ENCODE measurements at regions of chr3 and their contacts with region 1.

Region 1: DNA sequence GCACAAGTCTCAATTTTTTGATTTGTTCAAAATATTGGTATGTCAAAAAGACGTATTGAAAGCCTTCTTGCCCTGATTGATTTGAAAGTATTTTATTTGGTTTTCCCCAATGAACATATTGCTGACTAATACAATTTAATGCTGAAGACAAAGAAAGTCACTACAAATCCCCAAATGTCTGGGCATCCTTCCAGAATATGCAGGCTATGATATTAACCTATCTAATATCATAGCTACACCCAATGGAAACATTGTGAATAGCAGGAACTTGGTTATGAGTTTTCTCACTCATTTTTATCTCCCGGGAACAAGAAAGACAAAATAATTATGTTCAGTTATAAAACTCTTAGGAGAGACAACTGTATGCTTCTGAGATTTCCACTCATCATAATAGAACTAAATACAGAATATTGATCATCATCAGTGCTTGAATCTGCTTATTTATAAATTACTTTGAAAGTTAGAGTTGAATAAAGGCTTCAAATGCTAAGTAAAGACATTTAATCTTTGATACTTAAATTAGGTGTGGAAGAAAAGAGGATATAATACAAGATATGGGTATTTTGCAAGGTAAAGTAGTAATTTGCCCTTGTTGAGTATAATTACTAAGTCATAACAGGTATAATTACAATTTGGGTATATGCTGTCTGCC is 483.9 kb downstream of the RBMS3 start:
- DNase-seq: peak; percentile 89
- ATAC-seq: peak; percentile 57
- H3K4me3 ChIP-seq: no peak overlapping the region
- H3K27ac ChIP-seq: no peak overlapping the region
- H3K4me1 ChIP-seq: peaks cover 2% of the 10 kb centered on the region
- H3K27me3 ChIP-seq: no peaks in the 10 kb centered on the region
- CTCF ChIP-seq: peak; percentile 76
- POLR2A ChIP-seq: no peak
- RAD21 ChIP-seq: peak; percentile 78

Region 2: DNA sequence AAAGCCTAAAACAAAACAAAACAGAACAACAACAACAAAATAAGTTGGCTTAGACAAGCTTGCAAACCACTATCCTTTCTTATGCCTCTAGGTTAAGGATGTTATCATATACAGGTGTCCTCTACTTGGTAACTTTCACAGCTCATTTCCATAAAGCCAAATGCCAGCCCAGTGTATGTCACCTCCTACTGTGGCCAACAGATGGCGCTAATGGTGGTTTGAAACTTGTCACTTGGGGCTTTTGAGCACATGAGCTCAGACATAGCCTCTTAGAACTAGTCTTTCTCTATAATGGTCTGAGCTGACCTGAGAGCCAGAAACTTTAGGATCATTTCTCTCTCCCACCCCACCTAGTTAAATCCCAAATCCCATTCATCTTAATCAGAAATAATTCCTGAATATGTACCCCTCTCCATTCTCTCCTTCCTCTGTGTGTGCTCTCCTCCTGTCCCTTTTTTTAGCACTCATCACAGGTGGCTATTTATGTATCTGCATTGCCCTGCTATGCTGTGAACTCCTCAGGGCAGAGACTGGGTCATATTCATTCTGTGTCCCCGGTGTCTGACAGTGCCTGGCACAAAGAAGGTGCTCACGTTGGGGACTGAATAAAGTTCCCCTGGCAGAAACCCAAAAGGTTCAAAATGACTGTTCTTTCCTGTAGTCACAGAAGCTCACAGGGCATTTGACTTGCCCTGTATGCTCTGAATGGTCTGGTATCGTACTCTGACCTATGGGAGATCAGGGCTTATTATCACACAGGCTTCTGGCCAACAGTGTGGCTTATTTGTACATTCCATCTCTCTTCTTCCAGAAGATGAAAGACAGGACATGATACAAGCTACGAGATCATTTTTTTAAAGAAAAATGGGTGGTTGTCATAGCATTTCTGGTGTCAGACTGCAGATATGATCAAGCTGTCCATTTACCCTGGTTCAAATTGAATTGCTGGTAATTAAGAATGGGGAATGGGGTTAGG is 1096.8 kb before region 1 on chr3:
- CTCF ChIA-PET with region 1: no interaction called
- POLR2A ChIA-PET with region 1: no interaction called
- dilution Hi-C with region 1: no loop called
- in situ Hi-C with region 1: no loop called
- intact Hi-C with region 1: loop called (anchors 2 kb)
- DNase-seq: peak; percentile 52
- ATAC-seq: peak; percentile 85
- H3K4me3 ChIP-seq: no peak overlapping the region
- H3K27ac ChIP-seq: no peak overlapping the region
- H3K4me1 ChIP-seq: no peaks in the 10 kb centered on the region
- H3K27me3 ChIP-seq: peaks cover 2% of the 10 kb centered on the region; the same call in 1 of the 2 replicates
- CTCF ChIP-seq: peak; percentile 64
- POLR2A ChIP-seq: no peak
- RAD21 ChIP-seq: peak; percentile 62

Region 3: GRCh38 chr3:28853830-28854229 is 910.9 kb before region 1 on chr3:
- CTCF ChIA-PET with region 1: no interaction called
- POLR2A ChIA-PET with region 1: no interaction called
- dilution Hi-C with region 1: no loop called
- in situ Hi-C with region 1: no loop called
- intact Hi-C with region 1: loop called (anchors 10 kb)
- DNase-seq: peak; percentile 45
- ATAC-seq: no peak
- H3K4me3 ChIP-seq: no peak overlapping the region
- H3K27ac ChIP-seq: no peak overlapping the region
- H3K4me1 ChIP-seq: no peaks in the 10 kb centered on the region
- H3K27me3 ChIP-seq: peaks cover 4% of the 10 kb centered on the region; the same call in 1 of the 2 replicates
- CTCF ChIP-seq: peak; percentile 47
- POLR2A ChIP-seq: no peak
- RAD21 ChIP-seq: peak; percentile 50

Region 4: GRCh38 chr3:28916713-28917499 is 847.8 kb before region 1 on chr3:
- CTCF ChIA-PET with region 1: no interaction called
- POLR2A ChIA-PET with region 1: no interaction called
- dilution Hi-C with region 1: no loop called
- in situ Hi-C with region 1: loop called (anchors 10 kb)
- intact Hi-C with region 1: loop called (anchors 2 kb)
- DNase-seq: peak; percentile 65
- ATAC-seq: peak; percentile 66
- H3K4me3 ChIP-seq: peak overlapping the region; percentile 38
- H3K27ac ChIP-seq: peak overlapping the region; percentile 53
- H3K4me1 ChIP-seq: peaks cover 4% of the 10 kb centered on the region
- H3K27me3 ChIP-seq: no peaks in the 10 kb centered on the region
- CTCF ChIP-seq: peak; percentile 49
- POLR2A ChIP-seq: no peak
- RAD21 ChIP-seq: peak; percentile 70

Region 5: GRCh38 chr3:29144807-29145206 is 619.9 kb before region 1 on chr3:
- CTCF ChIA-PET with region 1: interaction called, 4 read pairs
- POLR2A ChIA-PET with region 1: no interaction called
- dilution Hi-C with region 1: no loop called
- in situ Hi-C with region 1: no loop called
- intact Hi-C with region 1: loop called (anchors 5 kb)
- DNase-seq: peak; percentile 65
- ATAC-seq: peak; percentile 52
- H3K4me3 ChIP-seq: no peak overlapping the region
- H3K27ac ChIP-seq: no peak overlapping the region
- H3K4me1 ChIP-seq: peaks cover 10% of the 10 kb centered on the region
- H3K27me3 ChIP-seq: no peaks in the 10 kb centered on the region
- CTCF ChIP-seq: peak; percentile 43
- POLR2A ChIP-seq: no peak
- RAD21 ChIP-seq: peak; percentile 49

Region 6: GRCh38 chr3:29802057-29802456 is 37.3 kb after region 1 on chr3:
- CTCF ChIA-PET with region 1: no interaction called
- POLR2A ChIA-PET with region 1: no interaction called
- dilution Hi-C with region 1: no loop called
- in situ Hi-C with region 1: no loop called
- intact Hi-C with region 1: no loop called
- DNase-seq: no peak
- ATAC-seq: no peak
- H3K4me3 ChIP-seq: no peak overlapping the region
- H3K27ac ChIP-seq: no peak overlapping the region
- H3K4me1 ChIP-seq: no peaks in the 10 kb centered on the region
- H3K27me3 ChIP-seq: no peaks in the 10 kb centered on the region
- CTCF ChIP-seq: no peak
- POLR2A ChIP-seq: no peak
- RAD21 ChIP-seq: no peak

Region 7: DNA sequence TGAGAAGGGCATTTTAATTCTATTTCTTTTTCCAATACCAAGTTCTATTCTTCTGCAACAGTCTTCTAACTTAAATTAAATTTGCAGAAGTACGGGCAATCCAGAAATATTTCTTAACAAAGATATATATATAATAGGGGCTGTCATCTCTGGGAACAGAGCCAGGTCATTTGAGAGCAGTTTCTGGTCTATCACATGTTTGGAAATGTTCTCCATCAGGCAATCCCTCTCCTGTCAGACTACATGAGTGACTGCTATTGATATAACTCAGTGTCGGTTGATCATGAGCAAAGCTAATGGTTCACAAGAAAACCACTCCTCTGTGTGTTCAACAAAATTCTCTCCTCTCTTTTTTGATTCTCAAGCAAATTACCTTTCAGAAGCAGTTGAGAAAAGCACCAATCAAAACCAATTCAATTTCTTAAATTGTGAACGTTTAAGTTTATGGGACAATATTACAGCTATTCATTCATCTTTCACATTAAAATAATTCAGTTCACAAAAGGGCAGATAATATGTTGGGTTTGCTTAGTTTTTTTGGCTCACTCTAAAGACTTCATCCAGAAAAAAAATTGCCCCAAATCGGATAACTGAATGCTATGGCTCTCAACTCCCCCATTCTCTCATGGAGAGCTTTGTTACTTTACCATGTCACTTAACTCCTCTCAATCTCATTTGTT is 688.8 kb after region 1 on chr3:
- CTCF ChIA-PET with region 1: no interaction called
- POLR2A ChIA-PET with region 1: no interaction called
- dilution Hi-C with region 1: no loop called
- in situ Hi-C with region 1: no loop called
- intact Hi-C with region 1: no loop called
- DNase-seq: no peak
- ATAC-seq: no peak
- H3K4me3 ChIP-seq: no peak overlapping the region
- H3K27ac ChIP-seq: no peak overlapping the region
- H3K4me1 ChIP-seq: peaks cover 5% of the 10 kb centered on the region; the same call in 1 of the 2 replicates
- H3K27me3 ChIP-seq: no peaks in the 10 kb centered on the region
- CTCF ChIP-seq: no peak
- POLR2A ChIP-seq: no peak
- RAD21 ChIP-seq: no peak

Measured in IMR-90 (cell line).